ENCODE measurements at regions of chr1 and their contacts with region 1.

Region 1: DNA sequence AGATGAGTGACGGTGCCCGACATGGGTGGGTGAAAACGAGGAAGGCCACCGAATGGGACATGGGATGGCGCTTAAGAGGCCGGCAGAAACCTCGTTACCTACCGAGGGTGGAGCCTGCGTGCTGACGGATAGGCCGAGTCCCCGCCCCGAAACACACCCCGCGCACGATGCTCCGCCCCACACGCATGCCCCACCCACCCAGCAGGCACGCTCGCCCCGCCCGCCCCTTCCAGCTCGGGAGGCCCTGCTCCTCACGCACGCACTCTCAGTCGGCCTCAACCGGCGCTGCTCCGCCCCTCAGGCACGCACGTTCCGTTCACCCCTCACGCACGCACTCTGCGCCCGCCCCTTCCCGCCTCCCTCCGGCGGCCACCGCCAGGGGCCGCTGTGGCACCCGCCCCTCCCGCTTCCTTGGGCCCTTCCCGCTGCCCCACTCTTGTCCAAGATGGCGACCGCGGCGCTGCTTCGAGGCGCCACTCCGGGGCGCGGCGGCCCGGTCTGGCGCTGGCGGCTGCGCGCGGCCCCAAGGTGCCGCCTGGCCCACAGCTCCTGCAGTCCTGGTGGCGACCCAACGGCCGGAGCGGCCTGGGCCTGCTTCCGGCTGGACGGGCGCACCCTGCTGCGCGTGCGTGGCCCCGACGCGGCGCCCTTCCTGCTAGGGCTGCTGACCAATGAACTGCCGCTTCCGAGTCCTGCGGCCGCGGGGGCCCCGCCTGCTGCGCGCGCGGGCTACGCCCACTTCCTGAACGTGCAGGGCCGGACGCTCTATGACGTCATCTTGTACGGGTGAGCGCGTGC is at the start of gene IBA57:
- DNase-seq: peak; percentile 91
- H3K4me3 ChIP-seq: peak within 1 kb of the TSS; percentile 73
- CTCF ChIP-seq: peak; percentile 99

Region 2: GRCh38 chr1:227999056-227999930 is 166.3 kb before region 1 on chr1:
- CTCF ChIA-PET with region 1: interaction called, 20 read pairs
- POLR2A ChIA-PET with region 1: no interaction called
- DNase-seq: no peak
- H3K4me3 ChIP-seq: no peak overlapping the region
- CTCF ChIP-seq: peak; percentile 86

Region 3: GRCh38 chr1:228139944-228140656 is 25.5 kb before region 1 on chr1 and contains the start of gene GUK1:
- CTCF ChIA-PET with region 1: interaction called, 23 read pairs
- POLR2A ChIA-PET with region 1: interaction called, 15 read pairs
- DNase-seq: peak; percentile 96
- H3K4me3 ChIP-seq: peak within 1 kb of the TSS; percentile 92
- CTCF ChIP-seq: peak; percentile 40

Region 4: GRCh38 chr1:228150461-228151179 is 15.0 kb before region 1 on chr1:
- CTCF ChIA-PET with region 1: interaction called, 53 read pairs
- POLR2A ChIA-PET with region 1: interaction called, 5 read pairs
- DNase-seq: no peak
- H3K4me3 ChIP-seq: no peak overlapping the region
- CTCF ChIP-seq: no peak

Region 5: GRCh38 chr1:228180271-228180958 is 14.8 kb after region 1 on chr1:
- CTCF ChIA-PET with region 1: interaction called, 47 read pairs
- POLR2A ChIA-PET with region 1: interaction called, 3 read pairs
- DNase-seq: no peak
- H3K4me3 ChIP-seq: no peak overlapping the region
- CTCF ChIP-seq: no peak